MCF 10A (cell line): ENCODE measurements at regions of chr5 and their contacts with region 1.

Region 1: DNA sequence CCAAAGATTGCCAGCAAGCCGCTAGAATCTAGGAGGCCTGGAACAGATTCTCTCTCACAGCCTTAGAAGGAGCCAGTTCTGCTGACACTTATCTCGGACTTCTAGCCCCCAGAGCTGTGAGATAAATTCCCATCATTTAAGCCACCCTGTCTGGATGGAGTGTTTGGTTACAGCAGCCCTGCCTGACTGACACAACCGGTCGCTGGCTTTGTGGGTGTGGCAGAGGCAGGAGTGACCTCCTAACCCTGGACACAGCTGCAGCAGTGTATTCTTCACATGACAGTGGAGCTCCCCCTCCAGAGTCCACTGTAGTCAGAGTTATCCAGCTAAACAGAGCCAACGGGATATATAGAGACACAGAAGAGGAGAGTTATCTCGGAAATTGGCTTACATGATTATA is 21.2 kb upstream of the IL17B start:
- DNase-seq: no peak
- H3K4me3 Mint-ChIP-seq: no peak overlapping the region
- H3K27ac Mint-ChIP-seq: no peak overlapping the region
- H3K4me1 Mint-ChIP-seq: no peaks in the 10 kb centered on the region
- H3K27me3 Mint-ChIP-seq: no peaks in the 10 kb centered on the region
- CTCF ChIP-seq: no peak

Region 2: DNA sequence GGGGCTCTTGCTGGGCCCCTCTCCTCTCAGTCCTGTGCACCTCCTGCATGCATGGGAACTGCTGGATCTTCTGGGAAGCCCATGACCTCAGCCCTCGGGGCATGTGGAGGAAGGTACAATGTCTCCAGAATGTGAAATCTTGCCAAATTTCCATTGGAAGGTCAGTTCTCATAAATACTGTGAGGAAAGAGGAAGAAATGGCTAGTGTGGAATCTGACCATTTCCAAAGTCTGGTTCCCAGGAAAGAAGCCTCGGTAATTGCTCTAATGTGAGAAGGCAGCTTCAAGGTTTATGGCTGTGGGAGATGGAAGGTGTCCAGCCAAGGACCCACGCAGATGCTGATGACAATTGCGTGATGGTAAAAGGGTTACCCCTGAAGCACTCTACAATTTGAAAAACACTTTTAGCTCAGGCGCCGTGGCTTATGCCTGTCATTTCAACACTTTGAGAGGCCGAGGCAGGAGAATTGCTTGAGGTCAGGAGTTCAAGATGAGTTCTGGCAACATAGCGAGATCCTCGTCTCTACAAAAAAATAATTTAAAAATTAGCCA is 13.1 kb before region 1 on chr5:
- CTCF ChIA-PET with region 1: interaction called, 36 read pairs
- POLR2A ChIA-PET with region 1: interaction called, 3 read pairs
- intact Hi-C with region 1: no loop called
- DNase-seq: no peak
- H3K4me3 Mint-ChIP-seq: no peak overlapping the region
- H3K27ac Mint-ChIP-seq: no peak overlapping the region
- H3K4me1 Mint-ChIP-seq: no peaks in the 10 kb centered on the region
- H3K27me3 Mint-ChIP-seq: no peaks in the 10 kb centered on the region
- CTCF ChIP-seq: no peak

Region 3: GRCh38 chr5:149455889-149456409 is 55.6 kb after region 1 on chr5:
- CTCF ChIA-PET with region 1: no interaction called
- POLR2A ChIA-PET with region 1: no interaction called
- intact Hi-C with region 1: no loop called
- DNase-seq: peak; percentile 70
- H3K4me3 Mint-ChIP-seq: no peak overlapping the region
- H3K27ac Mint-ChIP-seq: peak overlapping the region; percentile 9
- H3K4me1 Mint-ChIP-seq: peaks cover 13% of the 10 kb centered on the region
- H3K27me3 Mint-ChIP-seq: no peaks in the 10 kb centered on the region
- CTCF ChIP-seq: no peak